ENCODE measurements at regions of chr19 and their contacts with region 1.

Region 1: GRCh38 chr19:10120538-10121189 is 965 bp upstream of the EIF3G start:
- DNase-seq: no peak
- CTCF ChIP-seq: no peak

Region 2: GRCh38 chr19:10106100-10106936 is 14.3 kb before region 1 on chr19 and contains the start of gene PPAN:
- CTCF ChIA-PET with region 1: interaction called, 163 read pairs
- POLR2A ChIA-PET with region 1: interaction called, 22 read pairs
- DNase-seq: peak; percentile 98
- CTCF ChIP-seq: no peak

Region 3: DNA sequence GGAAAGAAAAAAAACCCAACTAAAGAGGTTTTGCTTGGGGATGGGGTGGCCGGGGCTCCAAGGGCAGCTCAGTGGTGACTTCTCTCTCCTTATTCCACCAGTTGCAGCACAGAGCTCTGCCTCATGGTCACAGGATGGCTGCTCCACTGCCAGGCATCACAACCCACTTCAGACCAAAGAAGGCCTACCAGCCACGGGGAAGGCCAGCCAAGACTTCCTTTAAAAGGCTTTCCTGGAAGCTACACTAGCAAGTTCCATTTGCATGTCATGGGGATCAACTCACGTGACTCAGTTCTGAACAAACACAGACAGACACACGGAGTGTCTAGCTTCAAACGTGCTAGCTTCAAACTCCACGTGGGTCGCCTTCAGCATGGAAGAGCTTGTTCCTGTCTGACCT is 12.2 kb after region 1 on chr19:
- CTCF ChIA-PET with region 1: interaction called, 13 read pairs
- POLR2A ChIA-PET with region 1: no interaction called
- DNase-seq: no peak
- CTCF ChIP-seq: no peak

Region 4: GRCh38 chr19:10243606-10244005 is 122.9 kb after region 1 on chr19:
- CTCF ChIA-PET with region 1: no interaction called
- POLR2A ChIA-PET with region 1: no interaction called
- DNase-seq: no peak
- CTCF ChIP-seq: no peak